ENCODE measurements at regions of chr2 and their contacts with region 1.

Region 1: DNA sequence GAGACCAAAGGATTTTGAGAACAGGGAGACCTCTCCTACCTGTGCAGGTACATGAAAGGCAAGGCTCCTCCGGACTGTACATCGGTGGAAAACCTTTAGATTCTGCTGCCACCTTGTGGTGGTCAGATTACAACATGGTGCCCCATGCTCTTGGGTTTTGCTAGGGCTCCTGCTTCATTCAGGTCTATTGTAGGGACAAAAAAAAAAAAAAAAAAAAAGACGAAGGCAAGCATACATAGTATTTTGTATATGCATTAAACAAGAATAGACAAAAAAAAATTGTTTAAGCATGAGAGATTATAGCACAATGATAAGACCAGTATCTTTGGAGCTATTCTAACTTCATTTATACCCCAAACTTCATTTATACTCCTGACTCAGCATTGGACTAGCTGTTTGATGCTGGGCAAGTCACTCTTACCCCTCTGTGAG is 27.4 kb upstream of the SPR start:
- DNase-seq: peak; percentile 59
- CTCF ChIP-seq: peak; percentile 74

Region 2: DNA sequence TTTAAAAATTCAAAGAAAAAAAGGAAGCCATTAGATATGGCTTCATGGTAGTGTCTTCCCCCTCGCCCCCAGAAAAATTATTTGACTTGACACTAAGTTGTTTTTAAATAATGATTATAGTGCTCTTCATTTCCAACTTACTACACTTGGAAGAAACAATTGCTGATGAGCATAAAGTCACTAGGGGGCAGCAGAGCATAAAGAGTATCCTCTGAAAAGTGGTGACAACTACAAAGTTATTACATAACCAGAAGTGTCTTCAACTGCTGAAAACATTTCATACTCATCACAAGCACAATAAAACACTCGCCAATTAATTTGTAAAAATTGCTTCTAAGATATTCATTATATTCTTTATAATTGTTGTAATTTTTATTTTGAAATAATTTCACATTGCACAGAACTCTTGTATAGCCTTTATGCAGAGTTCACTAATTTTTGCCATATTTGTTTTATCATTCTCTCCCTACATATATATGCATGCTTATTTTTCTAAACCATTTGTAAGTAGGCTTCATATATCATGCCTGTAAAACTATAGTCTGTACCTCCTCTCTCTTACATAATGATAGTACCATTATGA is 88.9 kb before region 1 on chr2:
- in situ Hi-C with region 1: loop called (anchors 5 kb)
- DNase-seq: peak; percentile 73
- CTCF ChIP-seq: peak; percentile 66

Measured in GM13976 (cell line).